Ovary (tissue), 10 donors: ENCODE measurements at regions of chr1 and their contacts with region 1.

Region 1: DNA sequence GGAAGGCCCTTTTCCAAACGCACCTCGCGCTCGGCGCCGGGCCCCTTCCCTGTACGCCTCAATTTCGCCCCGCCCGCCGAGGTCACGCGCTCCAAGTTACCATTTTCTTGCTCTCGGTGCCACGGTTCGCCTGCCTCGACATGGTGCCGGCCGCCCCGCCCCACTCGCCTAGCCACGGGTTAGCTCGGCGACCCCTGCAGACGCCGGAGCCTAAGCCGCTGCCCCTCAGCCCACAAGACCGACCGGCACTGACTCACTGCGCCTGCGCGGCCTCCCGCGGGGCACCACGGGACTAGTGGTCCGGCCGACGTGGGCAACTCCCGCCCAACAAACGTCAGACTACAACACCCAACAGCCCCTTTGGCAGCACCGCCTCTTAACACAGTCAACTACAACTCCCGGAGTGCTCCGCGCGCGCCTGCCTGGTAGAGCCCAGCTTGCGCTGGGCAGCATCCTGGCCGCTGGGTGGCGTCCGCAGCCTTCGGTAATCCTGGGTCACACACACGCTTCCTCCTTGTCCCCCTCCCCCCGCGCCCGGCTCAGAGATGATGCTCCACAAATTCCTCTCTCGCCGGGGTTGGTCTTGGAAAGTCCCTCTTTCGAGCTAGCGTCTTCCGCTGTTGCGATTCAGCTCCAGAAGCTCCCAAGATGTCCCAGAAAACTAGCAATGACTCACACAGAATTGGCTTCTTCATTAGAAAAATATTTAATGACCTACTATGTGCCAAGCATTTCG is at the start of gene TRAPPC3:
- DNase-seq: peak; percentile 100
- H3K4me3 ChIP-seq: peak within 1 kb of the TSS; percentile 68
- H3K27ac ChIP-seq: peak within 1 kb of the TSS; percentile 72 to 74
- H3K4me1 ChIP-seq: peaks cover 6% of the 10 kb centered on the region
- H3K27me3 ChIP-seq: no peaks in the 10 kb centered on the region
- CTCF ChIP-seq: peak; percentile 89 to 99 (median 97)
- EP300 ChIP-seq: peak; percentile 19
- POLR2A ChIP-seq: peak; percentile 86
- total RNA-seq, gene TRAPPC3: 42.3 to 49.6 (median 45.2) TPM

Region 2: GRCh38 chr1:36187800-36188593 is 38.6 kb after region 1 on chr1:
- intact Hi-C with region 1: loop called in 2 of 4 experiments (anchors 5 kb)
- DNase-seq: peak; percentile 77 to 85 (median 82)
- H3K4me3 ChIP-seq: no peak overlapping the region
- H3K27ac ChIP-seq: peak overlapping the region; percentile 47 to 55
- H3K4me1 ChIP-seq: peaks cover 4% of the 10 kb centered on the region
- H3K27me3 ChIP-seq: no peaks in the 10 kb centered on the region
- CTCF ChIP-seq: peak; percentile 67 to 90 (median 89)
- EP300 ChIP-seq: no peak
- POLR2A ChIP-seq: peak; percentile 5

Region 3: DNA sequence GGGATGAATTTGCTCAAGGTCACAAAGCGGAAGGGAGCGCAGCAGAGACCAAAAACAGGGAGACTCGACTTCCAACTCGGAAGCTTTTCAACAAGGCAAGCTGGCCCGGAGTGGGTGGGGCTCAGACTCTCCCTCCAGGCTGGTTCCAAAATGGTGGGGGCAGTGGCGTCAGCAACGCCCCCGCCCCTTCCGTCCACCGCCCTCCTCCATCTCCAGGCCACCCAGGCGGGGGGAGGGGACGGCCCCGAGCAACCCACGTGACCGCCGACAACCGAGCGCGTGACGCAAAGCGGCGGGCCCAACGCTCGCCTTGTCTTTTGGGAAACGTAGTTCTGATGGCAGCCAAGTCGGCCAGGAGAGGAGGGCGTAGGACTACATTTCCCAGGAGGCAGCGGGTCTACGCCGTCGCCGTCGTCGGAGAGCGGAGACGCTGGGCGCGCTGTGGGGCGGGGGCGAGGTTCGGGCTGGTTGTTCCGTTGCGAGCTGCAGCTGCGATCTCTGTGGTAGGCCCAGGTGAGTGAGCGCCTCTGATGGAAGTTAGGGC is 74.7 kb after region 1 on chr1 and contains the start of gene THRAP3:
- intact Hi-C with region 1: loop called in 2 of 4 experiments (anchors 2 to 10 kb)
- DNase-seq: peak; percentile 99 to 100 (median 100)
- H3K4me3 ChIP-seq: peak within 1 kb of the TSS; percentile 95
- H3K27ac ChIP-seq: peak within 1 kb of the TSS; percentile 78 to 93
- H3K4me1 ChIP-seq: peaks cover 5% of the 10 kb centered on the region
- H3K27me3 ChIP-seq: no peaks in the 10 kb centered on the region
- CTCF ChIP-seq: no peak
- EP300 ChIP-seq: peak; percentile 94
- POLR2A ChIP-seq: peak; percentile 99
- total RNA-seq, gene THRAP3: 49.2 to 101 (median 92.6) TPM

Region 4: DNA sequence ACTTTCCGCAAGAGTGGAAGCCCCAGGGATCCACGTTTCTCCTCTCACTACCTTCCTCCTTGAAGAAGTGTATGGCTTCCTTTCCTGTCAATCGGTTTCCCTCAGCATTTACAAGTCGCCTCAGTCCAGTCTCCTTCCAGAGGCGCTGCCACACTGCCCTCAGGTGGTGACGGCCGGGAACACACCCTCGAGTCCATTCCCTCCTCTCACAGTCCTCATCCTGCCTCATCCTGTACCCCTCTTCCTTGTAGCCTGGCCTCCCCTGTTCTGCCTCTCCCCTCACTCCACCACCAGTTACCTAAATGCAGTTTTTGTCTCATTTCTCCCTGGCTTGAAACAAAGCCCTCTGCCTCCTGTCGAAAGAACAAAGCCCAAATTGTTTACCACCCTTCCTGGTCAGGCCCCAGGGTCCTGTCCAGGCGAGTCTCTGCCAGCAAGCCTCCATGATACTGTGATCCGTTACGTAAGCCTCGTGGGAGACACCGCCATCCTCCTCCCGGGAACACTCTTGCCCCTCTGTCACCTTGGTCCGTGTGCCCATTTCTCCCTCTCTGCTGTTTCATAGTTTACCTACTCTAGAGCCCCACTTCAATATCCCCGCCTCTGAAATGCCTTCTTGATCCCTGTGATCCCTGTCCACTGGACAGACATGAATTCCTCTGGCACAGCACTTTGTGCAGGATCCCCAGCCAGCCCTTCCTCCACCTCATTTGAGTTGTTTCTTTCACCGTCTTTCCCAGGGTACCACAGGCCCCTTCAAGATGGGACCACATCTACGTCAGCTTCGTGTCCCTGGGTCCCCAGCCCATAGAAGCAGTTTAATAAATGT is 271.6 kb after region 1 on chr1:
- intact Hi-C with region 1: loop called in 1 of 4 experiments (anchors 10 kb)
- DNase-seq: peak; percentile 77 to 94 (median 91)
- H3K4me3 ChIP-seq: no peak overlapping the region
- H3K27ac ChIP-seq: no peak overlapping the region
- H3K4me1 ChIP-seq: peaks cover 1% of the 10 kb centered on the region
- H3K27me3 ChIP-seq: no peaks in the 10 kb centered on the region
- CTCF ChIP-seq: peak; percentile 74 to 82 (median 75)
- EP300 ChIP-seq: no peak
- POLR2A ChIP-seq: no peak